Activated CD4-positive, alpha-beta T cell treated with anti-CD3 and anti-CD28 coated beads, Interleukin-2, amount 10 ng/mL, durations not matched to agents 24 days and 14 days (primary cell): ENCODE measurements at regions of chr12 and their contacts with region 1.

Region 1: DNA sequence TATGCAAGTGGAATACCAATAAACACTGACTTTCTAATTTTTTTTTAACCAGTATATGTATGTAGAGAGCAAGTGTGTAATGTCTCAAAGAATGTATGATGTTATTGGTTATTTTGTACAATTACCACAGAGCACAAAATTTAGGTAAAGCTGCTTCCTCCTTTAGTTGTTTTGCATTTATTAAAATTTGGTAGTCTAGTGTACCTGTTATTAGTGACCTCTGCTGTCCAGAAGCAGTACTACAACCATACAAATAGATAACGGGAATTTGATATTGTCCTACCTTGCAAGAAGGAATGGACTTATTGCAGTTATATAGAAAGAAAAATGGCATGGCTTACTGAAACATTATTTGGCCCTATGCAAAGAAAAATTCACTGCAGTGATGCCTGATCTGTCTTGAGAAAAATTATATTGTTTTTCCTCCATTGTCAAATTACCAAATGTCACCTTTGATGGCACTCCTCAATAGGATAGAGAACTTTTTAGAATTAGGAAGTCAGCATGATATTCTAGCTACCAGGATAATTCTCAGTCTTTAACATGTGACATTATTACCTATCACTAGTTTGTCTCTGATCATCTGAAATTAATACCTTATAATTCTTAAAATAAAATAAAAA is 153.9 kb upstream of the RMST start:
- DNase-seq: peak; percentile 73
- H3K4me3 Mint-ChIP-seq: no peak overlapping the region
- H3K27ac Mint-ChIP-seq: no peak overlapping the region
- H3K4me1 Mint-ChIP-seq: no peaks in the 10 kb centered on the region
- H3K27me3 Mint-ChIP-seq: peaks cover 11% of the 10 kb centered on the region

Region 2: GRCh38 chr12:96578526-96579125 is 730.1 kb before region 1 on chr12:
- intact Hi-C with region 1: loop called (anchors 1 kb)
- DNase-seq: peak; percentile 74
- H3K4me3 Mint-ChIP-seq: no peak overlapping the region
- H3K27ac Mint-ChIP-seq: no peak overlapping the region
- H3K4me1 Mint-ChIP-seq: no peaks in the 10 kb centered on the region
- H3K27me3 Mint-ChIP-seq: peaks cover 11% of the 10 kb centered on the region

Region 3: DNA sequence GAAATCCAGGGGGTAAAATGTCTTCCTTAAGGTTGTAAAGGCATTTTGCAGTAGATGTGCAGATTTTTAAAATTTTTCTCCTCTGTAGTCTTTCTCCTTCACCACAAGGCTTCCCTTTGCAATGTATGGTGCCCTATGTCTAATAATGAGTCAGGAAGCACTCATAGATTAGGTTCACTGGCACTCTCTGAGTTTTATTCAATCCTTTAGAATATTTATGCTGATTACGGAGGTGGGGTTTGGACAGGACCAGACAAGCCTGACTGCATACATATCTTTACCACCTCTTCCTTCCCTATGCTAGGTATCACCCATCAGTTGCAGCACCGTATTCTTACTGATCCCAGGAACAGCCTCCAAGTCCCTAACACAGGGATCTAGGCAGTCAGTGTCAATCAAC is 302.1 kb before region 1 on chr12:
- intact Hi-C with region 1: no loop called
- DNase-seq: no peak
- H3K4me3 Mint-ChIP-seq: no peak overlapping the region
- H3K27ac Mint-ChIP-seq: no peak overlapping the region
- H3K4me1 Mint-ChIP-seq: no peaks in the 10 kb centered on the region
- H3K27me3 Mint-ChIP-seq: peaks cover 12% of the 10 kb centered on the region

Region 4: DNA sequence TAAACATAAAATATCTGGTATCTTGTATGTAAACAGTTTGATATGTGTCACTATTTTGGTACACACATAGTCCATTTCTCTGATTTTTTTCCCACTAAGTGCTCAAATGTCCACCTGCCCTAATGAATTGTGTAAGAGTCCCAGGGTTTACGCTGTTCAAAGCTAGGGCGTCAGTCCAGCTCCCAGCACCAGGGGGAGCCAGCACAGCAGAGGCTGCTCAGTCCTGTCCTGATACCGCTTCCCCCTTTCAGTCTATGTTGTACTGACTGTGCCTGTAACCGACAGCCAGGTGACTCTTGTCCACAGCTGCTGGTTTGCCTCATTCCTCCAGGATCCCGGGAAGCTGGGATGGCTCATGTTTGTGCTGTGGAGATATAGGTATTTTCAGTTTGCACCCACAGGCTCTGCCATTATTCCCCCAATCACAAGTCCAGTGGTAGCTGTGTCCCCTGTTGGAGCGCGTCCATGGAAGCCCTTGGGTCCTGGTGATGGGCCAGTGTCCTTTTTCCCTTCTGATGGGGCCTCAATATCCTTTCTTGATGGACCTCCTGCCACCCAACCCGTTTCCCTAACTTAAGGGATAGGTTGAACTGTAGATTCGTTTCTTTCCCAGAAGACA is 159.6 kb before region 1 on chr12:
- intact Hi-C with region 1: loop called (anchors 5 kb)
- DNase-seq: peak; percentile 84
- H3K4me3 Mint-ChIP-seq: no peak overlapping the region
- H3K27ac Mint-ChIP-seq: no peak overlapping the region
- H3K4me1 Mint-ChIP-seq: peaks cover 3% of the 10 kb centered on the region
- H3K27me3 Mint-ChIP-seq: peaks cover 2% of the 10 kb centered on the region